Dorsolateral prefrontal cortex (tissue), 120 donors: ENCODE measurements at regions of chr11 and their contacts with region 1.

Region 1: DNA sequence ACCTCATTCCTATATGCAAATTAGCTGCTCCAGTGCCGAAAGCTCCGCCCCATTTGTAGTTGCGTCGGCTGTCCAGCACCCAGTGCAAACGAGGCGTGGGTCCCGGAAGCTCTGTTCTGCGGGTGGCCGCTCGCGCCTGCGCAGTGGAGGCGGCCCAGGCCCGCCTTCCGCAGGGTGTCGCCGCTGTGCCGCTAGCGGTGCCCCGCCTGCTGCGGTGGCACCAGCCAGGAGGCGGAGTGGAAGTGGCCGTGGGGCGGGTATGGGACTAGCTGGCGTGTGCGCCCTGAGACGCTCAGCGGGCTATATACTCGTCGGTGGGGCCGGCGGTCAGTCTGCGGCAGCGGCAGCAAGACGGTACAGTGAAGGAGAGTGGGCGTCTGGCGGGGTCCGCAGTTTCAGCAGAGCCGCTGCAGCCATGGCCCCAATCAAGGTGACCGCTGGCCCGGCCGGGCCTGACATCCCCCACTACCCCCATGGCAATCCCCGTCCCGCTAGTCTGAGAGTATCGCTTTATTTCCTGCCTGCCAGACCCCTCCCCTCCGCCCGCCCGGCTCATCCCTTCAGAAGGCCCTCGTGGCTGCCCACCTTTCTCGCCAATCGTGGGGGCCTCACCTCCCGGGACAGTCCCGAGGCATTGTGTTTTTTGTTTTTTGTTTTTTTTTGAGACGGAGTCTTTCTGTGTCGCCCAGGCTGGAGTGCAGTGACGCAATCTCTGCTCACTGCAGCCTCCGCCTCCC is at the start of gene PRDX5:
- DNase-seq: peak; percentile 93 to 99 (median 97)
- H3K4me3 ChIP-seq: peak within 1 kb of the TSS; percentile 68 to 99 (median 93)
- H3K27ac ChIP-seq: peak within 1 kb of the TSS; percentile 93 to 100 (median 100)
- H3K27me3 ChIP-seq: no peaks in the 10 kb centered on the region
- CTCF ChIP-seq: peak; percentile 11 to 83 (median 69)
- total RNA-seq, gene PRDX5: 101 to 340 (median 208) TPM

Region 2: DNA sequence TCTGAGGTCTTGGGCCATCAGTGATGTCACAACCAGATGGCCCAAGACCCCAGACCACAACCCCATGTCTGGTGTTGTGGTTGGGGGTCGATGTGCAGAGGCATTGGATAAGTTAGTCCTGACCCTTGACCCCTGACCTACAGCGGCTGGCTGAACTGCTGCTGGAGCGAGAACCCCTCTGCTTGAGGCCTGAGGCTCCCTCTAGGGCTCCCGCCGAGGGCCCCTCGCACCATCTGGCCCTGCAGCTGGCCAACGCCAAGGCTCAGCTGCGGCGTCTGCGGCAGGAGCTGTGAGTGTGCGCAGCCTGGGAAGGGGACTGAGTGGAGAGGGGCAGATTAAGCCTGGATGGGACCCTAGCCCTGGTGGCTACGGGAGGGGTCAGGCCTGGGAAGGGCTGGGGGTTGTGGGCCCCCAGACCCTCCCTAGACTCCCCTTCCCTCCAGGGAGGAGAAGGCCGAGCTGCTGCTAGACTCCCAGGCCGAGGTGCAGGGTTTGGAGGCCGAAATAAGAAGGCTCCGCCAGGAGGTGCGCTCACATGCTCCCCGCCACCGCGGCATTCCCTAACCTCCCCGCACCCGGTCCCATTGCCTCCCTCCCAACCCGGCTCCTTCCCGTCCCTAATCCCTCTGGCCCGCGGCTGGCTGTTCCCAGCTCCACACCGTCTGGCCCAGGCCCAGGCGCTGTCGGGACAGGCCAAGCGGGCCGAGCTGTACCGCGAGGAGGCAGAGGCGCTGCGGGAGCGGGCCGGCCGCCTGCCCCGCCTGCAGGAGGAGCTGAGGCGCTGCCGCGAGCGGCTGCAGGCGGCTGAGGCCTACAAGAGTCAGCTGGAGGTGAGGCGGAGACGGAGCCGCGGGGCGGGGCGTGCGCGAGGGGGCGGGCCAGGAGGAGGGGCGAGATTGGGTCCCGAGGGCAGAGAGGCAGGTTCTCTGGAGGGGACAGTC is 24.0 kb after region 1 on chr11:
- intact Hi-C with region 1: no loop called
- DNase-seq: peak; percentile 46 to 90 (median 69)
- H3K4me3 ChIP-seq: peak overlapping the region; percentile 17 to 64 (median 50)
- H3K27ac ChIP-seq: peak overlapping the region in 46 of 59 donors; percentile 2 to 84 (median 47)
- H3K27me3 ChIP-seq: no peaks in the 10 kb centered on the region
- CTCF ChIP-seq: peak in 40 of 56 donors; percentile 7 to 48 (median 34)

Region 3: GRCh38 chr11:64448599-64449556 is 130.8 kb after region 1 on chr11:
- intact Hi-C with region 1: loop called in 1 of 2 experiments (anchors 5 kb)
- DNase-seq: peak; percentile 69 to 93 (median 82)
- H3K4me3 ChIP-seq: peak overlapping the region; percentile 18 to 71 (median 51)
- H3K27ac ChIP-seq: peak overlapping the region in 46 of 59 donors; percentile 1 to 85 (median 60)
- H3K27me3 ChIP-seq: no peaks in the 10 kb centered on the region
- CTCF ChIP-seq: peak in 55 of 56 donors; percentile 59 to 87 (median 79)